ENCODE measurements at regions of chr3 and their contacts with region 1.

Region 1: GRCh38 chr3:38558863-38559262 is 62.7 kb downstream of the EXOG start:
- DNase-seq: no peak
- ATAC-seq: no peak
- H3K4me3 ChIP-seq: no peak overlapping the region
- H3K4me3 Mint-ChIP-seq: no peak overlapping the region
- H3K27ac ChIP-seq: no peak overlapping the region
- H3K27ac Mint-ChIP-seq: no peak overlapping the region
- H3K4me1 ChIP-seq: no peaks in the 10 kb centered on the region
- H3K4me1 Mint-ChIP-seq: no peaks in the 10 kb centered on the region
- H3K27me3 ChIP-seq: no peaks in the 10 kb centered on the region
- H3K27me3 Mint-ChIP-seq: peaks cover 4% of the 10 kb centered on the region
- CTCF ChIP-seq: no peak

Region 2: DNA sequence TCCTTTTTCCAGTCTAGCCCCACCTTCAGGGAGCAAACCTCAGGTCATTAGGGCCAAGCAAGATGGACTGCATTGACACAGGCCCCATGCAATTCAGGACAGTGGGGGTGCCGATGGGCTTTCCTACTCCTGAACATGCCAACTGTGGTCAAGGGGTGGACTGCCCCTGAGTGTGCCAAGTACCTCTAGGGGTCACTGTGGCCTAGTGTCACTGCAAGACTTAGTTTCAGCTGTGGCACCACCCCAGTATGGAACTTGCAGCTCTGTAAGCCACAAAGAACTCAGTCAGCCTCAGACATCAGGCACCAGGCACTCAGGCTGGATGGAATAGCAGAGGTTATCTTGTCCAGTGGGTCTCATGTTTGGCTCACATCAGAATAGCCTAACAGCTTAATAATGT is 30.4 kb before region 1 on chr3:
- CTCF ChIA-PET with region 1: no interaction called
- POLR2A ChIA-PET with region 1: no interaction called
- intact Hi-C with region 1: loop called in 1 of 2 experiments (anchors 1 kb)
- DNase-seq: no peak
- ATAC-seq: no peak
- H3K4me3 ChIP-seq: no peak overlapping the region
- H3K4me3 Mint-ChIP-seq: no peak overlapping the region
- H3K27ac ChIP-seq: no peak overlapping the region
- H3K27ac Mint-ChIP-seq: no peak overlapping the region
- H3K4me1 ChIP-seq: no peaks in the 10 kb centered on the region
- H3K4me1 Mint-ChIP-seq: no peaks in the 10 kb centered on the region
- H3K27me3 ChIP-seq: no peaks in the 10 kb centered on the region
- H3K27me3 Mint-ChIP-seq: no peaks in the 10 kb centered on the region
- CTCF ChIP-seq: no peak

Measured in CD8-positive, alpha-beta T cell (primary cell).